MCF 10A (cell line): ENCODE measurements at regions of chr1 and their contacts with region 1.

Region 1: DNA sequence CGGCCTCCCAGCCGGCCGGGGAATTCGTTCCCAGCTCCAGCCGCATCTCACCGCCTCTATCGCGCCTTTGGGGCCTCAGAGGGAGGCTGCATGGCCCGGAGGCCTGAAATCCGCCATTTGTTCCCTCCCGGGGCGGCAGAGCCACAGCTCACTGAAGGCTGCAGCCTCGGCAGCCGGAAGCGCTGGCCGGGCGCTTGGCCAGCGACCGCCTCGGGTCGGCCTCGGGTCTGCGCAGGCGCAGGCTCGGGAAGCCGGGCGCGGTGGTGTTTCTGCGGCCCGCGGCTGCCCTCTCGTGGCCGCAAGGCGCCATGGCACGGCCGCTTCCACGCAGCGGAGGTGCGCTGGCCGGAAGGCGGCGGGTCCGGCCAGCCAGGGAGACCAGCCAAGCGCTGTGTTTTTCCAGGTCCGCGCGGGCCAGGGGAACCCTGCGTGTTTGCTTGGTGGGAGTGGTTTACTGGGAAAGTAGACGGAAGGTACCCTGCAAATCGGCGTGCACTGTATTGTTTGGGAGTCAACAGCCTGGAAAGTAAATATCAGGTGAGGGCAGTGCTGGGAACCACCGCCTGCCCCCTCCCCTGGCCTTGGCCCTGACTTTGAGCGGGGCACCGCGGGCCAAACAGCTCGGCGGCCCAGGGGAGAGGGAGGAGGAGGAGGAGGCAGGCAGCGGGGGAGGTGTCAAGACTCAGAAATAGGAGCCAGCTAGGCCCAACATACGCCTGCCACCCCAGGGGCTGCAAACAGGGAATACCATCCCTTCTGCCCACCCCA is 52.7 kb upstream of the CD34 start:
- DNase-seq: peak; percentile 95
- H3K4me3 Mint-ChIP-seq: peak overlapping the region; percentile 69
- H3K27ac Mint-ChIP-seq: peak overlapping the region; percentile 57
- H3K4me1 Mint-ChIP-seq: peaks cover 27% of the 10 kb centered on the region
- H3K27me3 Mint-ChIP-seq: no peaks in the 10 kb centered on the region
- CTCF ChIP-seq: peak; percentile 100

Region 2: DNA sequence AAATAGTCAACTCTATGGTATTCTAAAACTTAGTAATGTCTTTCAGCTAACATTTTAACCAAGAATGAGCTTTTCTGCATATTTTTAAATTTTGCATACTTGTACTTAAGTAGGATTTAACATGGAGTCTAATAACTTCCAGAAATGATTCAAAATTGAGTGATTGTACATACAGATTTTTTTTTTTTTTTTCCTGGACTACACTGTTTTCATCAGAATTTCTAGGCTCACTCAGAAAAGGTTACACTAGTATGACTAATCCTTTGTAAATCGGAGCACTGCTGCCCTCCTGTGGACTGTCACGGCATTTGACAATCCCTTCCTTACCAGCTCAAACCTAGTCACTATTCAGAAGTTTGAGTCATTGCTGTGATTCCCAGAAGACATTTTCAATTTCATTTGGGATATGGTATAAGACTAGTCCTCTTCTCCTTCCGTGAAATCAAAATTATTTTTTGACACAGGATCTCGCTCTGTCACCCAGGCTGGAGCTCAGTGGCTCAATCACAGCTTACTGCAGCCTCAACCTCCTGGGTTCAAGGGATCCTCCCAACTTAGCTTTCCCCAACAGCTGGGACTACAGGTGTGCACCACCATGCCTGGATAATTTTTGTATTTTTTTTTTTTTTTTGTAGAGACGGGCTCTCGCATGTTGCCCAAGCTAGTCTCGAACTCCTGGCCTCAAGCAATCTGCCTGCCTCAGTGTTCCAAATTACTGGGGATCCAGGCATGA is 166.2 kb before region 1 on chr1:
- CTCF ChIA-PET with region 1: interaction called, 26 read pairs
- POLR2A ChIA-PET with region 1: interaction called, 8 read pairs
- intact Hi-C with region 1: no loop called
- DNase-seq: peak; percentile 97
- H3K4me3 Mint-ChIP-seq: no peak overlapping the region
- H3K27ac Mint-ChIP-seq: peak overlapping the region; percentile 46
- H3K4me1 Mint-ChIP-seq: peaks cover 14% of the 10 kb centered on the region
- H3K27me3 Mint-ChIP-seq: no peaks in the 10 kb centered on the region
- CTCF ChIP-seq: peak; percentile 95

Region 3: GRCh38 chr1:207838156-207839082 is 125.2 kb before region 1 on chr1:
- CTCF ChIA-PET with region 1: interaction called, 128 read pairs
- POLR2A ChIA-PET with region 1: interaction called, 3 read pairs
- intact Hi-C with region 1: no loop called
- DNase-seq: no peak
- H3K4me3 Mint-ChIP-seq: no peak overlapping the region
- H3K27ac Mint-ChIP-seq: peak overlapping the region; percentile 32
- H3K4me1 Mint-ChIP-seq: peaks cover 34% of the 10 kb centered on the region
- H3K27me3 Mint-ChIP-seq: no peaks in the 10 kb centered on the region
- CTCF ChIP-seq: no peak

Region 4: DNA sequence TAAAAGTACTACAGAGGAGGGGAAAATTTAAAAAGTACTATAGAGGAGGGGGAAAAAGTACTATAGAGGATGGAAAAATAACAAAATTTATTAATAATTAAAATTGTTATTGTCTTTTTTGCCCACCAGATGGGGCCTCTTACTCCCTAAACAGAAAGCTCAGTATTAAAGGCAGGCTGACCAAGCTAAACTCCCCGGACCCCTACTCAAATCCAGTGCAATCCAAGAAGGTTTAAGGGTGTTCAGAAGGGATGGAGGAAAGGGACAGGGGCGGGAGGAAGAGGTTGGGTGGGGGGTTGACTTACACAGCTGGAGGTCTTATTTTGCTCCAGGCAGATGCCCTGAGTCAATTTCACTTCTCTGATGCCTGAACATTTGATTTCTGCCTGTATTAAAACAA is 66.4 kb before region 1 on chr1:
- CTCF ChIA-PET with region 1: interaction called, 118 read pairs
- POLR2A ChIA-PET with region 1: interaction called, 26 read pairs
- intact Hi-C with region 1: loop called (anchors 1 kb)
- DNase-seq: peak; percentile 32
- H3K4me3 Mint-ChIP-seq: no peak overlapping the region
- H3K27ac Mint-ChIP-seq: no peak overlapping the region
- H3K4me1 Mint-ChIP-seq: no peaks in the 10 kb centered on the region
- H3K27me3 Mint-ChIP-seq: no peaks in the 10 kb centered on the region
- CTCF ChIP-seq: peak; percentile 63

Region 5: GRCh38 chr1:207925210-207925609 is 38.4 kb before region 1 on chr1:
- CTCF ChIA-PET with region 1: interaction called, 20 read pairs
- POLR2A ChIA-PET with region 1: interaction called, 3 read pairs
- intact Hi-C with region 1: no loop called
- DNase-seq: no peak
- H3K4me3 Mint-ChIP-seq: no peak overlapping the region
- H3K27ac Mint-ChIP-seq: no peak overlapping the region
- H3K4me1 Mint-ChIP-seq: no peaks in the 10 kb centered on the region
- H3K27me3 Mint-ChIP-seq: peaks cover 33% of the 10 kb centered on the region
- CTCF ChIP-seq: no peak

Region 6: DNA sequence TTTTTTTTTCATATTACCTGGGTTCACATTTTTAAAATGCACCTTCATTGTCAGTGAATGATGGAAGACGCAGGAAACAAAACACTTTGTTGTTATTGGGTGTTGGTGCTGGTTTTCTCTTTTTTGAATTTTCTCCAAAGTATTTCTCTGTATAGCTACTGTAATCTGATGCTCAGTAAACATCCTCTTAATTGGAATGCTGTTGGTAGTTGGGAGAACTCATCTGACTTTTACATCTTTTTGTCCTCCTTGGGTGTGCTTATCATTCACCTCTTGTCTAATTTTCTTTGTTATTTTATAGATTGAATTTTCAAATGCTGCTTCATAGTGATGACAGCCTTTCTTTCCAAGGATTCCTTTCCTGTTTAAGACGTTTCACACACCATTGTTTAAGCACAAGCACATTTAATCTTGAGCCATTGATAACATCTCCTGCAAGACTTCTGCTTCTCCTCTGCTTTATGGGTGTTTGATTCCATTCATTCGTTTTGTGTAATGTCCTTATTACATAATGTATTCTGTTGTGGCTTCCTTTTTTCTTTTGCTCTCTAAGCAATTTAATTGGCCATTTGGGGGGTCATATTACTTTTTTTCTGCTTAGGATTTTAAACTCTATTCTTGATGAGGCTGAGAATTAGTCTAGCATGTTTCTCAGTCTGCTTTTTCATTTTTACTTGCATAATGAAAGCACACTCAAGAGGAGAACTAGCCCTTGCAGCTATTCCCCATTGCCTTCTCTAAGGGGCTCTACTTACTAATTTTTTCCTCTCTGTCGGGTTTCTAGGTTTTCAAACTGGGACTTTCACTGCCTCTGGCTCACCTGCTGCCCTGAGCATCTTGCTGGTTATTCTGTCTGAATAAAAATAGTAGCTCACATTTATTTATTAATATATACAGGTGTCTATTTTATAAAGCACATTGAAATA is 10.7 kb before region 1 on chr1:
- CTCF ChIA-PET with region 1: interaction called, 78 read pairs
- POLR2A ChIA-PET with region 1: interaction called, 25 read pairs
- intact Hi-C with region 1: no loop called
- DNase-seq: no peak
- H3K4me3 Mint-ChIP-seq: no peak overlapping the region
- H3K27ac Mint-ChIP-seq: no peak overlapping the region
- H3K4me1 Mint-ChIP-seq: no peaks in the 10 kb centered on the region
- H3K27me3 Mint-ChIP-seq: peaks cover 10% of the 10 kb centered on the region
- CTCF ChIP-seq: no peak